Adrenal gland (tissue), 19 donors: ENCODE measurements at regions of chr1 and their contacts with region 1.

Region 1: DNA sequence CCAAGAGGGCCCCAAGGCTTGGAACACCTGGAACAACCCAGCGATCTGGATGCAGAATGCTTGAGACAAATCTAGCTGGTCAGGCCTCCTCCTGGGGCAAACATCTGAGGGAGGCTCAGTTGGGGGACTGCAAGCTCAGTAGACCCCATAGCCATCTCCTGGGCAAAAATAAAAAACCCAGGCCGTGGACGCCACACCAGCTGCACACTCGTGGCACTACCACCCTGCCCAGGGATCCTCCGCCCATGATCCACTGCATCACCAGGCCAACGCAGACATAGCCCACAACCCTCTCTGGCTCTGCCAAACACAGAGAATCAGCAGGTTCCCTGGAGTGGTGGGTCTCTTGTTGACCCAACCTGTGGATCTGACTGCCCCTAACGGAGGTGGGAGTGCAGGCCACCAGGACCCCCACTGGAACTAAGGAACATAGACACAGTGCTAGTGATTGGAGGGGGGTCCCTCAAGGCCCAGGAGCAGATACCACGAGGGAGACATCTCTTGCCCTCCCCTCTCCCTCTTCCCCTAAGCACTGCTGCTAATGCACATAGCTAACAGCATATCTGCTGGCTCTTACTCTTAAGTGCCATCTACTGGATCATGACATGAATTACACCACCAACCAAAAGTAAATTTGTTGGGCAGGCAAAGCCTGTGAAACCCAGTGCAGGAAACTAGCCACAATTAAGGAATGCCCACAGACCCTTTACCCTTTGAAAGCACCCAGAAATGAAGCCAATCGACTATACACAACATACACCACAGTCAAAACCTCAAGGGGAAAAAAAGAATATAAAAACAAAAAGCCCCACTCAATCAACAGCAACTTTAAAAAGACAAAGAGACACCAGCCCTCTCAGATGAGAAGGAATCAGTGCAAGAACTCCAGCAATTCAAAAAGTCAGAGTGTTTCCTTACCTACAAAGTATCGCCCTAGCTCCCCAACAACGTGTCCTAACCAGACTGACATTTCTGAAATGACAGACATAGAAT is 147.3 kb downstream of the CHD1L start:
- DNase-seq: peak in 2 of 7 donors; percentile 16 to 19
- H3K4me3 ChIP-seq: no peak overlapping the region
- H3K27ac ChIP-seq: no peak overlapping the region
- H3K4me1 ChIP-seq: no peaks in the 10 kb centered on the region
- H3K27me3 ChIP-seq: no peaks in the 10 kb centered on the region
- CTCF ChIP-seq: peak; percentile 48 to 73 (median 68)
- POLR2A ChIP-seq: no peak

Region 2: DNA sequence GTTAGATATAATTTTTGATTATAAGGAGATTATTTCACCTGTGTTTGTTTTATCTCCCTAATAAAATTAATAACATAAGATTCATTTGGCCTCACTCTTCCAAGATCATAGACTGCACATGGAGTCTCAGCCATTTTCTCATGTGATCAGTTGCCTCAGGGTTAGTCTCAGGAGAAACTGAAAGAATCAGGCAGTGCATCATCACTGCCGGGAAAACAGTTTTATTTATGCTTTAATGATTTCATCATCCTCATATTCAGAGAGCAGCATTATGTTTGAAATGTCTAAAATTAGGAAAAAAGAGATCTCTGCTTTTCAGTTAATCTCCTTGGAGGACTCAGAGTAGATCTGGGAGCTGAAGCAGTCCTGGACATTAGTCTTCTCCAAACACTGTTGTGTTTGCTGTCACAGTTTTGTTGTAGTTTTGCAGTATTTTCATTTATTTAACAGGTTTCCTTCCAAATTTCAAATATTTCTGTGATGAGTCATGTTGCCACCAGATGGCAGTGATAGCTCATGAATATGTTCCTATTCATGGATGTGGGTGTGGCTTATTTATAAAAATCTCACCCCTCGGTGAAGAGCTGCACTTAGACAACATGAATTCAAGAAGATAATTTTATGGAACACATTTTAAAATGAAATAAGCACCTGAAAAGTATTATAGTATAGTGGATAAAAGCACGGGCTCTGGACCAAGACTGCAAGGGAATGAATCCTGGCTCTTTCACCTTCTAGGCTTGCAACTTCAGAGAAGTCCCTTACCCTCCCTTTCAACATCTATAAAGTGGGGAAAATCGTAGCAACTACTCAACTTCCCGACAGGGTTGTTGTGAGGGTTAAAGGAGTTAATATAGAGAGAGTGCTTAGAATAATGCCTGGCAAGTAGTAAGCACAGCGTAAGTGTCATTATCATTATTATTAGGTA is 116.2 kb before region 1 on chr1:
- intact Hi-C with region 1: loop called in 1 of 2 experiments (anchors 5 kb)
- DNase-seq: peak in 6 of 7 donors; percentile 19 to 64 (median 52)
- H3K4me3 ChIP-seq: no peak overlapping the region
- H3K27ac ChIP-seq: peak overlapping the region in 4 of 5 donors; percentile 46 to 65 (median 58)
- H3K4me1 ChIP-seq: peaks cover 8 to 14% of the 10 kb centered on the region in 2 donors
- H3K27me3 ChIP-seq: no peaks in the 10 kb centered on the region
- CTCF ChIP-seq: peak; percentile 25 to 72 (median 55)
- POLR2A ChIP-seq: no peak

Region 3: GRCh38 chr1:147472966-147473734 is 83.3 kb after region 1 on chr1:
- intact Hi-C with region 1: no loop called
- DNase-seq: peak in 1 of 7 donors; percentile 12
- H3K4me3 ChIP-seq: no peak overlapping the region
- H3K27ac ChIP-seq: no peak overlapping the region
- H3K4me1 ChIP-seq: no peaks in the 10 kb centered on the region
- H3K27me3 ChIP-seq: no peaks in the 10 kb centered on the region
- CTCF ChIP-seq: no peak
- POLR2A ChIP-seq: no peak